ENCODE measurements at regions of chr10 and their contacts with region 1.

Region 1: GRCh38 chr10:101238732-101239105 is 9.5 kb upstream of the LBX1 start:
- DNase-seq: no peak
- H3K4me3 ChIP-seq: no peak overlapping the region
- H3K27ac ChIP-seq: no peak overlapping the region
- H3K4me1 ChIP-seq: peaks cover 0 to 14% (median 6%) of the 10 kb centered on the region in 4 experiments; a peak in 6 of 7 replicates
- H3K27me3 ChIP-seq: peaks cover 69 to 84% (median 77%) of the 10 kb centered on the region in 4 experiments
- CTCF ChIP-seq: peak; percentile 80 to 94 (median 88)
- EP300 ChIP-seq: no peak
- POLR2A ChIP-seq: no peak
- RAD21 ChIP-seq: peak; percentile 25 to 57; a peak in 3 of 4 replicates

Region 2: DNA sequence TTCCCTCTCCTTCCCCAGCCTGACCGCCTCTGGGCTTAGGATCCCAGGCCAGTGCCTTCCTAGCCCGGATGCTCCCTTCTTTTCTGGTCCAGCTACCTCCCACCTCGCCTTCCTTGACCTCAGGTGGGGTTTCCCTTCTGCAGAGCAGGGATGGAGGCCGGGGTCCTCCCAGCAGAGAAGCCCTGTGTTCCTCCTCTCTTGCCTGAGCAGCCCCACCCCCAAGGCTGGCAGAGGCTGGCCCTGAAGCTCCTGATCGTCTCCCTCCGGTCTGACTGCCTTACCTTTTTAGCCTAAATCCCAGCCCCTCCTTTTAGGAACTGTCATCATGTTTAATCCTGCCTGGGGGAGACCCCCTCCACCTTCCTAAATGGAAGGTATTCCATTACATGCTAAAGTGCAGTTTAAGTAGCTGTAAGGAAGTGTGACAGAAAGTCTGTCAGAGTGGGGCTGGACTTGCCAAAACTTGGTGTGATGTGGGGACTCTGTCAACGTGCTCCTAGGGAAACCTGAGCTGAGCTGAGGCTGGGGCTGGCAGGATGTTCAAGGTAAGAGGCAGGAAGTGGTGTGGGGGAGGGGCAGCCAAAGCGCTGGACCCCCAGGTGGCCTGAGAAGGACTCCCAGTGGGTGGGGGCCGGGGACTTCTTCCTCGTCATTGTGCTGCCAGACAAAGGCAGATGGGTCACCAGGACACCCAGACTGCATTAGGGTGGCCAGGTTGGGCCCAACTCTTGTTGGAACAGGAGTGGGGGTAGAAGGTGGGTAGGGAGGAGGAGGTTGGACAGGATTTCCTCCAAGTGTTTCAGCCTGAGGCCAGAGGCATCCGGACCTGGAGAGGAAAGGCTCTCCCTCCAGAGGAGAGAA is 48.9 kb before region 1 on chr10:
- CTCF ChIA-PET with region 1: no interaction called
- POLR2A ChIA-PET with region 1: no interaction called
- DNase-seq: peak; percentile 21 to 64
- H3K4me3 ChIP-seq: peak overlapping the region in 1 of 4 experiments; percentile 5; a peak in 1 of 8 replicates
- H3K27ac ChIP-seq: no peak overlapping the region
- H3K4me1 ChIP-seq: peaks cover 0 to 18% (median 9%) of the 10 kb centered on the region in 4 experiments; a peak in 6 of 7 replicates
- H3K27me3 ChIP-seq: no peaks in the 10 kb centered on the region; a peak in 2 of 7 replicates
- CTCF ChIP-seq: no peak
- EP300 ChIP-seq: no peak
- POLR2A ChIP-seq: no peak
- RAD21 ChIP-seq: no peak

Region 3: DNA sequence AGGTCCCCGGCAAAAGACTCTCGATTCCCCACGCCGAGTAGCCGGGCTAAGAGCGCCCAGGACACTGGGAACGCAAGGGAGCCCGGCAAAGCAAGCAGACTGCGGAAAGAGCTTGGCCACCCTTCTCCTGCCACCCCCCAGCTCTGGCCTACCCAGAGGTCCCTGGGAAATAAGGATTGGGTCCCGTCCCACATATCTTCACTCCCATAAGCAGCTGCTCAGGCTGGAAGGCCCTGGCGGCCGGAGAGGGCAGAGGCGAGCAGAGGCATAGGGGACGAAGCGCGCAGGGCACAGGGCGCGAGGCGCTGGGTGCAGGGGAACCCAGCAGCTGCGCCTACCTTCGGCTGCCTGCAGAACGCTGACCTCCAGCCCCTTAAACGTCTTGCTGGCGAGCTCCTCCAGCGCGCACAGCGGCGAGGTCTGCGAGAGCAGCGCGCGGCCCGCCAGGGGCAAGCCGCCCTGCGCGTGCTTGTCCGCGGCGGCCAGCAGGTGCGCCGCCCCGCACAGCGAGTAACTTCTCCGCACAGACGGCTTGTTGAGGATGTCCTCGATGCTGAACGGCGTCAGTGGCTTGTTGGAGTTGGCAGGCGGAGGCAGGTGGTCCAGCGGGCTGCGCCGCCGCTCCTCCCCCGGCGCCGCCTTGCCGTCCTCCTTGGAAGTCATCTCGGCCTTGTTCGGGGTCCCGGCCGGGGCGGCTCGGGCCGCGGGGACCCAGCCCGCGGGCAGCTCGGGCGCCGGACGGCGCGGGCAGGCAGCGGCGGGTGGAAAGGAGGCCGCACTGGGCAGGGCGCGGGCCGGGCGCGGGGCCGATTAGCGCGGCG is 10.4 kb before region 1 on chr10:
- CTCF ChIA-PET with region 1: interaction called, 113 read pairs
- POLR2A ChIA-PET with region 1: interaction called, 3 read pairs
- DNase-seq: no peak
- H3K4me3 ChIP-seq: no peak overlapping the region
- H3K27ac ChIP-seq: no peak overlapping the region
- H3K4me1 ChIP-seq: peaks cover 6 to 29% (median 10%) of the 10 kb centered on the region in 4 experiments; a peak in 6 of 7 replicates
- H3K27me3 ChIP-seq: peaks cover 97 to 100% (median 100%) of the 10 kb centered on the region in 4 experiments
- CTCF ChIP-seq: peak in 1 of 3 experiments; percentile 18; a peak in 1 of 4 replicates
- EP300 ChIP-seq: no peak
- POLR2A ChIP-seq: no peak
- RAD21 ChIP-seq: no peak

Region 4: DNA sequence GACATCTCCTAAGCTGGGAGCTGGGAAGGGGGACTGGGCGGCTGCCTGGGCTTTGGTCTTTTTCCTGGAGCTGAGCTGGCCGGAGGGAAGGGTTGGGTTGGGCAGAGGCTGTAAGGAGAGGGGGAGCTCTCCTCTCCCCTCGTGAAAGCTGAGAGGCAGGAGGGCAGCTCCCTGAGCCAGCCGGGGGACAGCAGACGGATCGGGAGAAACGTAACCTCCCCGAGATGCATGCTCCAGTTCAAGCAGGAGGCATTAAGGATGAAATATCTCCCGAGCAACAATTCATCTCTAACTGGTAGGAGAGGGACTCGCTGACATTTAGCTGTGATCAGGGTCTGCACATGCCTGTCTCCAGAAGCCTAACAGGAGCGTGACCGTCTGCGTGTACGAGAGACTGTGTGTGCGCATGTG is 10.5 kb after region 1 on chr10:
- CTCF ChIA-PET with region 1: interaction called, 60 read pairs
- POLR2A ChIA-PET with region 1: no interaction called
- DNase-seq: no peak
- H3K4me3 ChIP-seq: no peak overlapping the region
- H3K27ac ChIP-seq: no peak overlapping the region
- H3K4me1 ChIP-seq: peaks cover 0 to 2% (median 0%) of the 10 kb centered on the region in 4 experiments; a peak in 3 of 7 replicates
- H3K27me3 ChIP-seq: peaks cover 1 to 13% (median 6%) of the 10 kb centered on the region in 4 experiments; a peak in 4 of 7 replicates
- CTCF ChIP-seq: no peak
- EP300 ChIP-seq: no peak
- POLR2A ChIP-seq: no peak
- RAD21 ChIP-seq: no peak

Region 5: DNA sequence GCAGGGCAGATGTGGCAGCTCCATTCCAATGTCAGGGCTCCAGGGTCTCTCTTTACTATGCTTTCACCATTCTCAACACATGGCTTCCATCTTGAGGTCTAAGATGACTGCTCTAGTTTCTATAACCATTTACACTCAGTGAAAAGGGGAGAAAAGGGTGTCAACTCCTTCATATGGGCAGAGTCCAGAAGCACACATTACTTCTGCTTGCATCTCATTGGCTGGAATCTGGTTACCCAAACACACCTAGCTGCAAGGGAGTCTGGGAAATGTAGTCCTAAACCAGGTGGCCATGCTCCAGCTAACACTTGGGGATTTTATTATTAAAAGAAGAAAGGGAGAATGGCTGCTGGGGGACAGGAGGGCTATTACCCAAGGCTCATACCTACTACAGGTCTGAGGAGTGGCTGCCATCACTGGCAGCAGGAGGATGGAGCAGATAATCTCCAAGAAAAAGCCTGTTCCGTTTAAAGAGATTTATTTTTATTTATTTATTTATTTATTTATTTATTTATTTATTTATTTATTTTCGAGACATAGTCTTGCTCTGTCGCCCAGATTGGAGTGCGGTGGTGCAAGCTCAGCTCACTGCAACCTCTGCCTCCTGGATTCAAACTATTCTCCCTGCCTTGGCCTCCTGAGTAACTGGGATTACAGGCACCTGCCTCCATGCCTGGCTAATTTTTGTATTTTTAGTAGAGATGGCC is 19.6 kb after region 1 on chr10:
- CTCF ChIA-PET with region 1: interaction called, 62 read pairs
- POLR2A ChIA-PET with region 1: no interaction called
- DNase-seq: no peak
- H3K4me3 ChIP-seq: no peak overlapping the region
- H3K27ac ChIP-seq: no peak overlapping the region
- H3K4me1 ChIP-seq: peaks cover 2 to 19% (median 10%) of the 10 kb centered on the region in 4 experiments
- H3K27me3 ChIP-seq: peaks cover 0 to 4% (median under 1%) of the 10 kb centered on the region in 4 experiments; a peak in 4 of 7 replicates
- CTCF ChIP-seq: no peak
- EP300 ChIP-seq: no peak
- POLR2A ChIP-seq: no peak
- RAD21 ChIP-seq: no peak

Region 6: DNA sequence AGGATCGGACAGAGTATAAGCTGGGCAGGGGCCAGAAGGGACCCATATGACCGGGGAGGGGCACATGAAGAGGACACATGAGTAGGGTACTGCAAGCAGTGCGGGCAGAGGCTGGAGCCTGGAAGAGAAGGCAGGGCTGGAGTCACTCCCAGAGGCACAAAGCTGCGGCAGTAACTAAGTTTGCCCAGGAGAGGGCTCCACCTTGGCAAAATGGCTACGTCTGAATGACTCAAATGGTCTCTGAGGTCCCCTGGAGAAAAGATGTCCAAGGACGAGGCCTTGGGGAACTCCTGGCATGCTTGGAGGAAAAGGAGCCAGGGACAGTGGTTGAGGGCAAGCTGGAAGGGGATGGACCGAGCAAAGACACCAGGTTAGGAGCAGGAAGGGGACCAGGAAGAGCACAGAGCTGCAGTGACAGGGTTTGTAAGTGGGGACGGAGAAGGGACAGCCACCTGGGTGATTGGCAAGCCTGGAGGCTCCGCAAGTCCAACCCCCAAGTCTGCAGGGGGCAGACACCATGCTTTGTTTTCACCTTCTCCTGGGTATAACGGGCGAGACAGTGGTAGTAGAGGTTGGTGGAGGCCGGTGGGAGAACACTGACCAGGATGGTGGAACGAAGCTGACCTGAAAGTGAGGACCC is 33.6 kb after region 1 on chr10:
- CTCF ChIA-PET with region 1: interaction called, 15 read pairs
- POLR2A ChIA-PET with region 1: no interaction called
- DNase-seq: peak; percentile 65 to 90
- H3K4me3 ChIP-seq: peak overlapping the region in 1 of 4 experiments; percentile 14; a peak in 1 of 8 replicates
- H3K27ac ChIP-seq: no peak overlapping the region
- H3K4me1 ChIP-seq: peaks cover 4 to 8% (median 6%) of the 10 kb centered on the region in 4 experiments; a peak in 5 of 7 replicates
- H3K27me3 ChIP-seq: no peaks in the 10 kb centered on the region; a peak in 3 of 7 replicates
- CTCF ChIP-seq: peak; percentile 80 to 93 (median 82)
- EP300 ChIP-seq: no peak
- POLR2A ChIP-seq: no peak
- RAD21 ChIP-seq: peak; percentile 57 to 65

Region 7: GRCh38 chr10:101441541-101442455 is 203.1 kb after region 1 on chr10:
- CTCF ChIA-PET with region 1: interaction called, 11 read pairs
- POLR2A ChIA-PET with region 1: no interaction called
- DNase-seq: no peak
- H3K4me3 ChIP-seq: no peak overlapping the region
- H3K27ac ChIP-seq: no peak overlapping the region
- H3K4me1 ChIP-seq: peaks cover 0 to under 1% (median 0%) of the 10 kb centered on the region in 4 experiments; a peak in 1 of 7 replicates
- H3K27me3 ChIP-seq: no peaks in the 10 kb centered on the region
- CTCF ChIP-seq: peak in 2 of 3 experiments; percentile 80 to 83; a peak in 3 of 4 replicates
- EP300 ChIP-seq: no peak
- POLR2A ChIP-seq: no peak
- RAD21 ChIP-seq: peak; percentile 93 to 95